Activated CD4-positive, alpha-beta T cell treated with anti-CD3 and anti-CD28 coated beads for 36 hours (primary cell): ENCODE measurements at regions of chr7 and their contacts with region 1.

Region 1: GRCh38 chr7:64887756-64888508 is 15.1 kb upstream of the ZNF273 start:
- DNase-seq: peak; percentile 69
- ATAC-seq: peak; percentile 62
- H3K4me3 Mint-ChIP-seq: peak overlapping the region; percentile 74
- H3K27ac Mint-ChIP-seq: no peak overlapping the region
- H3K4me1 Mint-ChIP-seq: peaks cover 14% of the 10 kb centered on the region
- H3K27me3 Mint-ChIP-seq: peaks cover 52% of the 10 kb centered on the region

Region 2: DNA sequence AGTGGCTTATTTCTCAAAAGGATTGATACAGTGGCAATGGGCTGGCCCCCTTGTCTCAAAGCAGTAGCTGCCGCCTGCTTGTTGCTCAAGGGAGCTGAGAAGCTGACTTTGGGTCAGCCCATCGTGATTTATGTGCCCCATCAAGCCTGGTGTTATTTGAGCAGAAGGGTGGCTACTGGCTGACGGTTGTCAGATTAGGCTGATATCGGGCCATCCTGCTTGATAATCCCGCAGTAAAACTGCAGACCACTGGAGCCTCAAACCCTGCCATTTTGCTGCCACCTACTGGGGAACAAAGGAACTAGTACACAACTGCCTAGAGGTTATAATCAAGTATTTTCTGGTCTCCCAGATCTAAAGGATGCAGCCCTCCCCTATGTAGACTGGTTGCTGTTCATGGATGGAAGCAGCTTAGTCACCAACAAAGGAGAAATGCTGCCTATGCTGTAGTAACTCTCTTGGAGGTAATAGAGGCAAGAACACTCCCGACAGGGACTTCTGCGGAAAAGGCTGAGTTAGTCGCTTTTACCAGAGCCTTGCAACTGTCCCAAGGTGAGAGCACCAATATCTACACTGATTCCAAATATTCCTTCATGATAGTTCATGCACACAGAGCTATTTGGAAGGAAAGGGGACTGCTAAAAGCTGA is 419.8 kb after region 1 on chr7:
- CTCF ChIA-PET with region 1: no interaction called
- POLR2A ChIA-PET with region 1: no interaction called
- intact Hi-C with region 1: loop called in 1 of 2 experiments (anchors 10 kb)
- DNase-seq: peak; percentile 52
- ATAC-seq: peak; percentile 69
- H3K4me3 Mint-ChIP-seq: no peak overlapping the region
- H3K27ac Mint-ChIP-seq: no peak overlapping the region
- H3K4me1 Mint-ChIP-seq: no peaks in the 10 kb centered on the region
- H3K27me3 Mint-ChIP-seq: peaks cover 1% of the 10 kb centered on the region